Right lobe of liver (tissue), 6 donors: ENCODE measurements at regions of chr14 and their contacts with region 1.

Region 1: DNA sequence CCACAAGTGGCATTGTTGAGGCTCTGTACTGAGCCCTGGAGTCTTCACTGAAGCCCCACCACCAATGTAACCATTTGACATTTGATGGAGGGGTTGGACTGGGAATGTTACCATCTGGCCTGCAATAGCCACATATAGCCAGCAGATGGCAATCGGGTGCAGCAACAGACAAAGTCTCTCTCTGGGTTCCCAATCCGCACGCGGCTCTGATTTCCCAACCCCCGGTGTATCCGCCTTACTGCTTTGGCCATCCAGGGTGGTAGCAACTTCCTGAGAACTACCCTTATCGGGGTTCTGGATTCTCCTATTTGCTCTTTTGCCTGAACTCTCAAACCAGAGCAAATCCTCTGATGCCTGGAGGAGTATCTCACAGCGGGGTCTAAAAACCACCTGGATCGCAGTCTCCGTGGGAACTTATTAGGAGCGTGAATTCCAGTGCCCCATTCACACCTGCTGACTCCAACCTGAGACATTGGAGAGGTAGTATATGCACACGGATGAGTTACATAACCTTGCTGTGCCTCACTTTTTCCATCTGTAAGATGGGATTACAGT is 14.2 kb downstream of the VRTN start:
- DNase-seq: peak; percentile 79 to 80 (median 80)
- ATAC-seq: peak; percentile 95 to 100 (median 98)
- H3K4me3 ChIP-seq: no peak overlapping the region
- H3K27ac ChIP-seq: no peak overlapping the region
- H3K4me1 ChIP-seq: no peaks in the 10 kb centered on the region
- H3K27me3 ChIP-seq: no peaks in the 10 kb centered on the region
- CTCF ChIP-seq: peak; percentile 89 to 95 (median 94)
- POLR2A ChIP-seq: no peak

Region 2: GRCh38 chr14:74478996-74479635 is 116.7 kb after region 1 on chr14:
- intact Hi-C with region 1: loop called (anchors 5 to 10 kb)
- DNase-seq: no peak
- ATAC-seq: peak; percentile 42 to 65 (median 58)
- H3K4me3 ChIP-seq: no peak overlapping the region
- H3K27ac ChIP-seq: no peak overlapping the region
- H3K4me1 ChIP-seq: no peaks in the 10 kb centered on the region
- H3K27me3 ChIP-seq: no peaks in the 10 kb centered on the region
- CTCF ChIP-seq: peak; percentile 59 to 84 (median 66)
- POLR2A ChIP-seq: no peak